Activated CD4-positive, alpha-beta T cell treated with anti-CD3 and anti-CD28 coated beads, Interleukin-2, amount 10 ng/mL, durations not matched to agents 24 days and 14 days (primary cell): ENCODE measurements at regions of chr4 and their contacts with region 1.

Region 1: GRCh38 chr4:140523857-140524742 is at the start of gene ELMOD2:
- DNase-seq: peak; percentile 99
- H3K4me3 Mint-ChIP-seq: peak within 1 kb of the TSS; percentile 85
- H3K27ac Mint-ChIP-seq: peak within 1 kb of the TSS; percentile 34
- H3K4me1 Mint-ChIP-seq: peaks cover 16% of the 10 kb centered on the region
- H3K27me3 Mint-ChIP-seq: peaks cover 1% of the 10 kb centered on the region
- total RNA-seq, gene ELMOD2: 10.5 and 12.3 TPM in 2 replicates

Region 2: DNA sequence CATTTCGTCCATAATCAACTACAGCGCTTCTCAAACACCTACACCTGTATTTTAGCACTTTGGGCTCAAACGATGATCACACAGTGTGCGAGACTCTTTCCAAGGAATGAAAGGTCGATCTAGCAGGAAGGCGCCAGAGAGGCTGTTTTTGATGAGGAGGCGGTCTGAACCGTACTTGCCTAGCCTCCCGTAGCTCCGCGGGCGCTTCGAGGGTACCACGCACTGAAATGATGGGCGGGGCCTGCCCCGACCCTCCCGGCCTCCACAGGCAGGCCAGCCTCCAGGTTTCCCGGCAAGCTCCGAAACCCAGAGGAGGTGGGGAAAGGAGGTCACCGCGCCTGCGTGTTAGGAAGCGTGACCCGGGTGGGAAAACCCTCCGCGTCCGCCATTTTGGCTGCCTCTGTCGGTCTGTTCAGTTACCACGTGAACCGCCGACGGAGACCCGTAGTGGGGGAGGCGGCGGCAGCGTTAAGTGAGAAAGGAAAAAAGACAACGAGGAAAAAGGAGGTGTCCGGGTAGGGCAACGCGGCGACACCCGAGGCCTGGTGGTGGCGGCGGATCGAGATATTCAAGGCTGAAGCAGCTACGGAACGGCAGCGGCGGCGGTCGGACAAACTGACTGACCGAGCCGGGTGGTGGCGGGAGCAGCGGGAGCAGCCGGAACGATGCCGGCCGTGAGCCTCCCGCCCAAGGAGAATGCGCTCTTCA is 1222.8 kb before region 1 on chr4 and contains the start of gene NAA15:
- intact Hi-C with region 1: loop called (anchors 5 kb)
- DNase-seq: peak; percentile 99
- H3K4me3 Mint-ChIP-seq: peak within 1 kb of the TSS; percentile 99
- H3K27ac Mint-ChIP-seq: peak within 1 kb of the TSS; percentile 100
- H3K4me1 Mint-ChIP-seq: peaks cover 52% of the 10 kb centered on the region
- H3K27me3 Mint-ChIP-seq: no peaks in the 10 kb centered on the region
- total RNA-seq, gene NAA15: 114 and 115 TPM in 2 replicates

Region 3: DNA sequence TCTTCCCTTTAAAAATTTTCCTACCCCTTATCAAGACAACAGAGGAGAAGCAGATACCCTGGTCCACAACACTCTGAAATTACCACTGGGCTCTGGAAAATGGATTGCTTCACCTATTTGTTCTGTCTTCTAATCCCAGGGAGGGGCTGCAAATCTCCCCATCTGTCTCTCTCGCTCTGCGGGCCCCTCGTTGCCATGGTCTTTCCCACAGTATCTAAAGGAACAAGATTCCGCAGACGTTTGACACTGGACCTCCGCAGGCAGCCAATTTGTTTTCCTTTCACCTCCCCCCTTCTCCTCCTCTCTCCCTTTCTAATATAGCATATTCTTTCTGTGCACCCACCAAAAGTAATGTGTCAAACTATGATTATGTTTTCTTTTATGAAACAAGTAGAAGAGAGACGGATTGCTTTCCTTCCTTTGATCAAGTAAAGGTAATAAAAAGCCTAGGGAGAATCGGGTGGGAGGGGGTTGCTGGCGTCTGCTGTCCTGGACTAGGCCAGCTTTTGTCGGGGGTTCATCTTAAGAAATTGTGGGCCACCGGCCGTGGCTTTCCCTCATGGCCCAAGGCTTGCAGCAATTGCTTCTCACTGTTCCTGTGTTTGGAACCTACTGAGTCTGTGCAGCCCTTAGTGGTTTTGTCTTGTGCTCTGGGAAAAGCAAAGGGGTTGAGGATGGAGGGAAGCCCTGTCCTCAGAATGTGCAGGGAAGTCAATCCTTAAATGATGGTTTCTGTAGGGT is 777.5 kb before region 1 on chr4:
- intact Hi-C with region 1: no loop called
- DNase-seq: no peak
- H3K4me3 Mint-ChIP-seq: no peak overlapping the region
- H3K27ac Mint-ChIP-seq: no peak overlapping the region
- H3K4me1 Mint-ChIP-seq: peaks cover 5% of the 10 kb centered on the region
- H3K27me3 Mint-ChIP-seq: peaks cover 6% of the 10 kb centered on the region

Region 4: DNA sequence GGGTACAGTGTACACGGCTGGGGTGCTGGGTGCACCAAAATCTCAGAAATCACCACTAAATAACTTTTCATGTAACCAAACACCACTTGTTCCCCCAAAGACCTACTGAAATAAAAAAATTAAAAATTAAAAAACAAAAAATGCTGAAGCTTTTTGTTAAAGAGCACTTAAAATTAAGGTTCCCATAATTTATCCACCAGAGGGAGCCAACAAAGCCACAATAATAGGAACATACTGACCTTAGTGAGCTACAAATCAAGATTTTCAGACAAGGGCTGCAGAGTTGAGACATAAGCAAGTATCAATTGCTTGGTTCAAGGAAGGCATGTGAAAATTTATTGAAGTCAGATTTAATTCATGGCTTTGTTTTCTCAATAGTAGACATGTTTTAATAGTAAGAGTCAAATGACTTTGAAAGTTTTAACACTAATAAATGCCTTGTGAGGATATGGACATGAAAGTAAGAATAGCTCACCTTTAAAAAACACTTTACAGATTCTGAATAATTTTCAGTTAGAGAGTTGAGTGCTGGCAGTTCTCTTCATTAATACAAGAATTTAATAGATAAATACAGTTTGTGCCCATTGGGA is 193.7 kb before region 1 on chr4:
- intact Hi-C with region 1: no loop called
- DNase-seq: no peak
- H3K4me3 Mint-ChIP-seq: no peak overlapping the region
- H3K27ac Mint-ChIP-seq: no peak overlapping the region
- H3K4me1 Mint-ChIP-seq: peaks cover 5% of the 10 kb centered on the region
- H3K27me3 Mint-ChIP-seq: peaks cover 13% of the 10 kb centered on the region

Region 5: GRCh38 chr4:140373328-140374129 is 150.6 kb before region 1 on chr4 and contains the start of gene SCOC:
- intact Hi-C with region 1: loop called (anchors 1 kb)
- DNase-seq: peak; percentile 99
- H3K4me3 Mint-ChIP-seq: no peak within 1 kb of the TSS
- H3K27ac Mint-ChIP-seq: peak within 1 kb of the TSS; percentile 65
- H3K4me1 Mint-ChIP-seq: peaks cover 24% of the 10 kb centered on the region
- H3K27me3 Mint-ChIP-seq: no peaks in the 10 kb centered on the region
- total RNA-seq, gene SCOC: 33.7 and 33.8 TPM in 2 replicates

Region 6: GRCh38 chr4:140448830-140449229 is 75.3 kb before region 1 on chr4:
- intact Hi-C with region 1: no loop called
- DNase-seq: no peak
- H3K4me3 Mint-ChIP-seq: no peak overlapping the region
- H3K27ac Mint-ChIP-seq: no peak overlapping the region
- H3K4me1 Mint-ChIP-seq: no peaks in the 10 kb centered on the region
- H3K27me3 Mint-ChIP-seq: peaks cover 26% of the 10 kb centered on the region

Region 7: DNA sequence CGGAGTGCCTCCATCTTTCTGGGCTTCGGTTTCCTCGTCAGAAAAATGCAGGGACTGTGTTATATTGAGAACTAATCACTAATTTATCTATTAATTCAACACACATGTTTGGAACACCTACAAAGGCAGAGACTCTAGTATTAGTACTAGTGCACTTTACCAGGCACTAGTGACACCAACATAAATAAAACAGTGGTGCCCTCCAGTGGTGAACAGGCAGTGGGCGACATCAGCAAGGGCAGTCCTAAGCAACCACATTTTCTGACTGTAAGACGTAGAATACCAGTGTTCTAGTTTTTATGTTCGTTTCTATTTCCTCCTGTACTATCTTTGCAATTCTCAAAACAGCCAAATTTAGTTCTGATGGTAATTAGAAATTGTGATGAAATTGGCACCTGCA is 113.7 kb after region 1 on chr4:
- intact Hi-C with region 1: loop called (anchors 10 kb)
- DNase-seq: peak; percentile 78
- H3K4me3 Mint-ChIP-seq: no peak overlapping the region
- H3K27ac Mint-ChIP-seq: no peak overlapping the region
- H3K4me1 Mint-ChIP-seq: no peaks in the 10 kb centered on the region
- H3K27me3 Mint-ChIP-seq: peaks cover 2% of the 10 kb centered on the region

Region 8: DNA sequence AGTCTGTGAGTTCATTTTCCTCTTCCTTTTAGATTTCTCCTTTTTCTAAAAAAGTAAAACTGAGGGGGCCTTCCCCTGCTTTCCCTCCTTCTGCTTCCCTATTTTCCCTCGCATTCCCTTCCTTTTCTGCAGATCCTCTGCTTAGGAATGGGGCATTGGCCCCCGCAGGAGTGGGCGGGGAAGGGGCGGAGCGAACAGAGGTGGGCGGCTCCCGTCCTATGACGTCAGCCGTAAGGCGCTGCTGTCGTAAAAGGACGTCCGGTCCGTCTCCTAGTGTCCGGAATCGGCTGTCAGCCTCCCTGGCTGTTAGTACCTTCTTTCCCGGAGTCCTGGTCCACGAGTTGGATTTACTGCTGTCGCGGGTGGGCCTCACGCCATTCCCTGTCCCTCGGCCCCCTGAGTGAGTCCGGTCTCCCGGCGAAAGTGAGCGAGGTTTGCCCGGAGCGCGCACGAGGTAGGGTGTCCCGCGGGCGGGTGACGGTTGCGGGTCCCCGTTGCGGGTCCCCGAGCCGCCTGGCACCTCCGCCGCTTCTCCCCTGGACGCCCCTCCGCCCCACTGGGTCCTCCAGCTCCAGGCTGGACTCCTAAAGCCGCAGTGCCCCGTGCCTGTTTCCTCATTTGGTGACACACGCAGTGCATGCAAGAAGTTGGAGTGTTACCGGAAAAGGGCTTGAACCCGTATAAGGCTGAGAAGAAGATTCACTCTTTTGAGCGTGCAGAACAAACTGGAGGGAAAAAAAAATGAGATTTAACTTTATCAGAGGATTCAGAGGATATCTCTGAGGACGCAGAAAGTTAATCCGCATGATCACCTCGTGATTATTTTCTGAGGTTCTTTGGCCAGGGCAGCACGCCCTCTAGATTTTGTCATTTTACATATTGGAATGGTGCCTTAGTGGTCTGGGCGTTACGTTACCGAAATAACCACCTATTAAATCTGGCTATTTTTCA is 696.8 kb after region 1 on chr4 and contains the start of gene ZNF330:
- intact Hi-C with region 1: loop called (anchors 10 kb)
- DNase-seq: peak; percentile 97
- H3K4me3 Mint-ChIP-seq: peak within 1 kb of the TSS; percentile 95
- H3K27ac Mint-ChIP-seq: peak within 1 kb of the TSS; percentile 98
- H3K4me1 Mint-ChIP-seq: peaks cover 37% of the 10 kb centered on the region
- H3K27me3 Mint-ChIP-seq: peaks cover 4% of the 10 kb centered on the region
- total RNA-seq, gene ZNF330: 60.2 and 64.6 TPM in 2 replicates